Left cardiac atrium (tissue), 4 donors: ENCODE measurements at regions of chr7 and their contacts with region 1.

Region 1: GRCh38 chr7:134954197-134955082 is 31.9 kb upstream of the AGBL3 start:
- DNase-seq: no peak
- ATAC-seq: no peak

Region 2: DNA sequence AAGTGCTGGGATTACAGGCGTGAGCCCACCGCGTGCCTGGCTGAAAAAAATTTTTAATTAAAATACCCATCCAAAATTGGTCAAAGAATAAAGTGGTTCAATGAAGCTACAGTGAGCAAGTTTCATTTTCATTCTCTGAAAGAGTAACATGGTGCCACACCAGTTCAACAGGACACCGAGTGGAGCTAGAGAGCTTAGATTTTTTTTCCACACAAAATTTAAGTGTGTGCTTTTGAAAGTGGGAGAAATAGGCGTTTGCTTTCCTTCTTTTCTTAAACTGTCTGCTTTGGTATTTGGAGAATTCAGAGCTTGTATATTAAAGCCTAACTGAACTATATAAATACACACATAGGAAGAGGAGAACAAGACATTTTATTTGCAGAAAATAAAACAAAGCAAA is 264.4 kb before region 1 on chr7:
- intact Hi-C with region 1: loop called (anchors 5 to 10 kb)
- DNase-seq: no peak
- ATAC-seq: peak; percentile 81 to 82